ENCODE measurements at regions of chr19 and their contacts with region 1.

Region 1: GRCh38 chr19:10120538-10121189 is 965 bp upstream of the EIF3G start:
- DNase-seq: peak; percentile 88
- H3K4me3 ChIP-seq: no peak overlapping the region
- H3K27ac ChIP-seq: no peak overlapping the region
- H3K4me1 ChIP-seq: peaks cover 5% of the 10 kb centered on the region
- H3K27me3 ChIP-seq: no peaks in the 10 kb centered on the region
- CTCF ChIP-seq: no peak

Region 2: GRCh38 chr19:10135551-10136334 is 15.1 kb after region 1 on chr19:
- CTCF ChIA-PET with region 1: no interaction called
- dilution Hi-C with region 1: no loop called
- in situ Hi-C with region 1: no loop called
- intact Hi-C with region 1: loop called (anchors 1 kb)
- DNase-seq: peak; percentile 67
- H3K4me3 ChIP-seq: peak overlapping the region in 1 of 3 experiments; percentile 29
- H3K27ac ChIP-seq: no peak overlapping the region
- H3K4me1 ChIP-seq: peaks cover 10% of the 10 kb centered on the region
- H3K27me3 ChIP-seq: no peaks in the 10 kb centered on the region
- CTCF ChIP-seq: peak in 1 of 2 donors; percentile 36

Region 3: DNA sequence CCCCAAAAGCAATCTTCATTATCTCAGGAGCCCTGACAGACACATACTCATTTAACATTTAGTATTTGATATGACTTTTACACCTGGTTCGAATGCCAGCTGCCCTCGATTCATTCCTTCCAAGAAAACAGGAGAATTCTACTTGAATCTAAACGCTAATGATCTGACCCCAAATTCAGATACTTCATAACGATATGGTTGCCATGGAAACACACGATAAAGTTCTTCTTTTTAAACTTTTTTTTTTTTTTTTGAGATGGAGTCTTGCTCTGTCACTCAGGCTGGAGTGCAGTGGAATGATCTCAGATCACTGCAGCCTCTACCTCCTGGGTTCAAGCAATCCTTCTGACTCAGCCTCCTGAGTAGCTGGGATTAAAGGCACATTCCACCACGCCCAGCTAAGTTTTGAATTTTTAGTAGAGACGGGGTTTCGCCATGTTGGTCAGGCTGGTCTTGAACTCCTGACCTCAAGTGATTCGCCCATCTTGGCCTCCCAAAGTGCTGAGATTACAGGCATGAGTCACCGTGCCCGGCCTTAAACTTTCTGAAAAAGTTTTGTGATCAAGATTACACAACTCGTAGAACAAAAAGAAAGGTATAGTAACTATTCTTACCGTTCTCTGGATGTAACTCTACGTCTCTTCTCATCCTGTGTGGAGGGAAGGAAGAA is 52.7 kb after region 1 on chr19:
- CTCF ChIA-PET with region 1: interaction called, 10 read pairs
- dilution Hi-C with region 1: no loop called
- in situ Hi-C with region 1: no loop called
- intact Hi-C with region 1: no loop called
- DNase-seq: peak; percentile 54
- H3K4me3 ChIP-seq: no peak overlapping the region
- H3K27ac ChIP-seq: peak overlapping the region; percentile 12
- H3K4me1 ChIP-seq: no peaks in the 10 kb centered on the region
- H3K27me3 ChIP-seq: no peaks in the 10 kb centered on the region
- CTCF ChIP-seq: no peak